IMR-90 (cell line): ENCODE measurements at regions of chr5 and their contacts with region 1.

Region 1: GRCh38 chr5:32709781-32710549 is 1.2 kb upstream of the NPR3 start:
- DNase-seq: peak; percentile 79
- ATAC-seq: peak; percentile 62
- H3K4me3 ChIP-seq: peak overlapping the region; percentile 84
- H3K27ac ChIP-seq: peak overlapping the region; percentile 80
- H3K4me1 ChIP-seq: no peaks in the 10 kb centered on the region; the same call in none of the 2 replicates
- H3K27me3 ChIP-seq: no peaks in the 10 kb centered on the region
- CTCF ChIP-seq: peak; percentile 75
- POLR2A ChIP-seq: peak; percentile 65; the same call in 1 of the 2 replicates
- RAD21 ChIP-seq: peak; percentile 50

Region 2: GRCh38 chr5:32628048-32628803 is 81.7 kb before region 1 on chr5:
- CTCF ChIA-PET with region 1: no interaction called
- POLR2A ChIA-PET with region 1: no interaction called
- dilution Hi-C with region 1: no loop called
- in situ Hi-C with region 1: no loop called
- intact Hi-C with region 1: no loop called
- DNase-seq: peak; percentile 85
- ATAC-seq: peak; percentile 68
- H3K4me3 ChIP-seq: no peak overlapping the region
- H3K27ac ChIP-seq: peak overlapping the region; percentile 56; the same call in 1 of the 2 replicates
- H3K4me1 ChIP-seq: peaks cover 20% of the 10 kb centered on the region
- H3K27me3 ChIP-seq: no peaks in the 10 kb centered on the region
- CTCF ChIP-seq: no peak
- POLR2A ChIP-seq: no peak
- RAD21 ChIP-seq: 0 out of 2 replicates have a peak, but pooled peaks have one; percentile 1

Region 3: DNA sequence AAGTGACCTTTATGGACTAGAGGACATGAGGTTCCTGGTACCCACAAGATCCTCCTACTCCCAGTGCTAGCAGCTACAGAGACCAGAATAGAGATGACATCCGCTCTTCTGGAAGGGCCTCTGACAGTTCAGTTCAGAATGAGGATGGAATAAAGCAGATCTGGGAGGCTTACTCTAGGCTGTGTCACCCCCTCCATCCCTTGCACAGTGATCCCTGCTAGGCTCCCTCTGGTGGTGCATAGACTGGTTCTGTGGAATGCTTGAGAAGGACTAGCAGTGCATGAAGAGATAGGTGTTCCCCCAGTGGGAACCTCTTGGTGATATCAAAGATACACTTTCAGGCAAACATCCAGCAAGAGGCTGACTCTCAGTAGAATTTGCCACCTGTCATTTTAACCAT is 84.1 kb after region 1 on chr5:
- CTCF ChIA-PET with region 1: no interaction called
- POLR2A ChIA-PET with region 1: no interaction called
- dilution Hi-C with region 1: no loop called
- in situ Hi-C with region 1: no loop called
- intact Hi-C with region 1: loop called (anchors 5 kb)
- DNase-seq: peak; percentile 54
- ATAC-seq: peak; percentile 77
- H3K4me3 ChIP-seq: no peak overlapping the region
- H3K27ac ChIP-seq: no peak overlapping the region
- H3K4me1 ChIP-seq: peaks cover 11% of the 10 kb centered on the region
- H3K27me3 ChIP-seq: no peaks in the 10 kb centered on the region
- CTCF ChIP-seq: peak; percentile 48
- POLR2A ChIP-seq: no peak
- RAD21 ChIP-seq: peak; percentile 55

Region 4: DNA sequence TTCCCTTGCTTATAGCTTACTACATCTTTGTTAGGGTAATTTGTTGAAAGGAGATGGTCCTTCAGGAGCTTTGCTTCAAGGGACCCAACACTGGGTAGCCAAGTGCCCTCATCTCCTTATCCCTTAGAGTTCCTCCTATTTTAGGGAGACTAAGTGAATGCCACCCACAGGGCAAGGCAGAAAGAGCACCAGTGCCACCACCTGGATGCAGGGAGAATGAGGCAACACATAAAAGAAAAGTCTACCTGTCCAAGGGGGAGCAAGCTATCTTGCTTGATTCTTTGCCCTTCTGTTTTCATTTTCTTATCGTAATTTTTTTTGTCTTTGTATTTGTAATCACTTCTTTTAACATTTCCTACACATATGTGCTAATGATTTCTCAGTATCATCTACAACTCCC is 206.7 kb after region 1 on chr5:
- CTCF ChIA-PET with region 1: interaction called, 4 read pairs
- POLR2A ChIA-PET with region 1: no interaction called
- dilution Hi-C with region 1: no loop called
- in situ Hi-C with region 1: loop called (anchors 10 kb)
- intact Hi-C with region 1: loop called (anchors 1 kb)
- DNase-seq: peak; percentile 52
- ATAC-seq: peak; percentile 79
- H3K4me3 ChIP-seq: no peak overlapping the region
- H3K27ac ChIP-seq: no peak overlapping the region
- H3K4me1 ChIP-seq: peaks cover 2% of the 10 kb centered on the region; the same call in 1 of the 2 replicates
- H3K27me3 ChIP-seq: no peaks in the 10 kb centered on the region
- CTCF ChIP-seq: peak; percentile 68
- POLR2A ChIP-seq: no peak
- RAD21 ChIP-seq: peak; percentile 82

Region 5: GRCh38 chr5:33170411-33170810 is 460.4 kb after region 1 on chr5:
- CTCF ChIA-PET with region 1: interaction called, 3 read pairs
- POLR2A ChIA-PET with region 1: no interaction called
- dilution Hi-C with region 1: no loop called
- in situ Hi-C with region 1: loop called (anchors 10 kb)
- intact Hi-C with region 1: no loop called
- DNase-seq: no peak
- ATAC-seq: no peak
- H3K4me3 ChIP-seq: no peak overlapping the region
- H3K27ac ChIP-seq: no peak overlapping the region
- H3K4me1 ChIP-seq: no peaks in the 10 kb centered on the region
- H3K27me3 ChIP-seq: no peaks in the 10 kb centered on the region
- CTCF ChIP-seq: no peak
- POLR2A ChIP-seq: no peak
- RAD21 ChIP-seq: no peak

Region 6: DNA sequence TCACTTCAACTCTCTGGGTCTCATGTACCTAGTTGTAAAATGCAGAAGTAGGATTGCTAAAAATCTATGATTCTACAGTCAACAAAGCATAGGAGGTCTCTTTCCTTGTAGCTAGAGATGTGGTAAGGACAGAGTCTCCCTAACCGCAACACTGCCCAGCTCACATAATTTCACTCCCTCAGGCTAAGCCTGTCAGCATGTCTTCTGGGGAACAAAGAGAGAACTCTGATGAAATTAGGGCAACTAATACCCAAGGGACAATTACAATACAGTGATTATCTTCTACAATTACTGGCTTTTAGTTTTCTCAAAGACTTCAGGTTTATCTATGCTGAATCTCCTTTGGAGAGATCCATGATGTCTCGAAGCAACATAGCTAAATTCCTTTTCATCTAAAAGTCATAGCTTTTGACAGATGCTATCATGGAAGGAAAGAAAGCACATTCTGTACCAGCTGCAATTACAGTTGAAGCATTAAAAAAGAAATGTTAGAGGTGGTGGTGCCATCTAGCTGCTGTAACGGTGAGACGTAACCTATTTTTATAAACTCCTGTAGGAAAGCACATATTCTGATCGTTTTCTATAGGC is 589.8 kb after region 1 on chr5:
- CTCF ChIA-PET with region 1: no interaction called
- POLR2A ChIA-PET with region 1: no interaction called
- dilution Hi-C with region 1: no loop called
- in situ Hi-C with region 1: no loop called
- intact Hi-C with region 1: loop called (anchors 2 kb)
- DNase-seq: peak; percentile 71
- ATAC-seq: peak; percentile 86
- H3K4me3 ChIP-seq: no peak overlapping the region
- H3K27ac ChIP-seq: peak overlapping the region; percentile 2; the same call in 1 of the 2 replicates
- H3K4me1 ChIP-seq: peaks cover 3% of the 10 kb centered on the region; the same call in 1 of the 2 replicates
- H3K27me3 ChIP-seq: no peaks in the 10 kb centered on the region
- CTCF ChIP-seq: peak; percentile 56
- POLR2A ChIP-seq: no peak
- RAD21 ChIP-seq: peak; percentile 67

Region 7: DNA sequence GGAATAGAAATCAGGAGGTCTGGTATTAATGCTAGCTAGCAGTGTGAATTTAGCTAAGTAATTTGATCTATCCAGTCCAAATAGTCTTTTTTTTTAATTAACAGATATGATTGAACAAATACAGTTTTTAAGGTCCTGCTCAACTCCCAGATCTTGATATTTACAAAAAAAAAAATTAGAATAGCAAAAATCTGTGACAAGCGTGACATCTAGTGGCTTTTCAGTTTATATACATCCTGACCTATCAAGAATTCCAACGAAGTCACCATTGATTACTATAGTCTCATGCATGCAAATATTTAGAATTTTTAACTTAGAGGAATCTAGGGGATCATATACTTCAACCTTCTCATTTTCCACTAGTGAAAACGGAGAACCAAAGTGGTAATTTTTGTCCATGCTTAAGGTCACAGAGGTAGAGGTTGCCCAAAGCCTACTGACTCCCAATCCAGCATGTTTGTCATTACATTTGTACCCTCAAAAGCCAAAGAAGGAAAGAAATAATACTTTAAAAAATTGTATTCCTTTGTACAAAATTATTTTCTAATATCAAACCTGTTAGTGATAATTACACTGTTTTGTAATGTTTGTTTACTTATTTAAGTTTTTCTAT is 713.2 kb after region 1 on chr5:
- CTCF ChIA-PET with region 1: interaction called, 3 read pairs
- POLR2A ChIA-PET with region 1: no interaction called
- dilution Hi-C with region 1: no loop called
- in situ Hi-C with region 1: no loop called
- intact Hi-C with region 1: loop called (anchors 2 kb)
- DNase-seq: peak; percentile 73
- ATAC-seq: peak; percentile 79
- H3K4me3 ChIP-seq: no peak overlapping the region
- H3K27ac ChIP-seq: no peak overlapping the region
- H3K4me1 ChIP-seq: no peaks in the 10 kb centered on the region; the same call in 1 of the 2 replicates
- H3K27me3 ChIP-seq: no peaks in the 10 kb centered on the region
- CTCF ChIP-seq: peak; percentile 66
- POLR2A ChIP-seq: no peak
- RAD21 ChIP-seq: peak; percentile 71